Activated B cell treated with CpG ODN at 0.5 μM for 24 hours (primary cell): ENCODE measurements at regions of chr16 and their contacts with region 1.

Region 1: GRCh38 chr16:67470359-67470758 is 10.6 kb downstream of the ATP6V0D1 start:
- DNase-seq: no peak
- ATAC-seq: no peak
- H3K4me3 Mint-ChIP-seq: no peak overlapping the region
- H3K27ac Mint-ChIP-seq: no peak overlapping the region
- H3K4me1 Mint-ChIP-seq: peaks cover 60% of the 10 kb centered on the region
- H3K27me3 Mint-ChIP-seq: no peaks in the 10 kb centered on the region
- CTCF ChIP-seq: no peak

Region 2: GRCh38 chr16:67260426-67261075 is 209.8 kb before region 1 on chr16:
- CTCF ChIA-PET with region 1: interaction called, 9 read pairs
- POLR2A ChIA-PET with region 1: no interaction called
- intact Hi-C with region 1: loop called (anchors 5 kb)
- DNase-seq: no peak
- ATAC-seq: peak; percentile 45
- H3K4me3 Mint-ChIP-seq: no peak overlapping the region
- H3K27ac Mint-ChIP-seq: no peak overlapping the region
- H3K4me1 Mint-ChIP-seq: no peaks in the 10 kb centered on the region
- H3K27me3 Mint-ChIP-seq: peaks cover 5% of the 10 kb centered on the region
- CTCF ChIP-seq: no peak

Region 3: GRCh38 chr16:67279296-67280089 is 190.9 kb before region 1 on chr16 and contains the start of gene PLEKHG4:
- CTCF ChIA-PET with region 1: interaction called, 6 read pairs
- POLR2A ChIA-PET with region 1: no interaction called
- intact Hi-C with region 1: loop called (anchors 1 kb)
- DNase-seq: peak; percentile 73
- ATAC-seq: peak; percentile 97
- H3K4me3 Mint-ChIP-seq: peak within 1 kb of the TSS; percentile 79
- H3K27ac Mint-ChIP-seq: no peak within 1 kb of the TSS
- H3K4me1 Mint-ChIP-seq: peaks cover 3% of the 10 kb centered on the region
- H3K27me3 Mint-ChIP-seq: no peaks in the 10 kb centered on the region
- CTCF ChIP-seq: peak; percentile 41
- total RNA-seq, gene PLEKHG4: 7.8 TPM in 2 replicates

Region 4: DNA sequence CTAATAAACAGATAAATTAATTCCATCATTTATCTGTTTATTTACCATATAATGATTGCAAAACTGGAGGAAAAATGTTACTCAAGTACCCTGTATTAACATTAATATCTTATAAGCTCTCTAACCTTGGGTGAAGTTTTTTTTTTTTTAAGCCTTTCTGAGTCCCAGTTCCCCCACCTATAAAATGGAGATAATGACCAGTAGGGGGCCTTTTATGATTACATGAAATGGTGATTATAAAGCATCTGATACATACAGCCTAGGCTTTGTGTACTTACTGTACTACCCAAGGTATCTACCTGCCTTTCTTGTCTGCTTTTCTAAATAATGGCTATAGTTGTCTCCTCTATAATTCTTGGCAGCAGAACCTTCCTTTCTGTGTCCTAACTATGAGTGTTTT is 121.2 kb before region 1 on chr16:
- CTCF ChIA-PET with region 1: interaction called, 4 read pairs
- POLR2A ChIA-PET with region 1: no interaction called
- intact Hi-C with region 1: loop called (anchors 1 kb)
- DNase-seq: no peak
- ATAC-seq: peak; percentile 45
- H3K4me3 Mint-ChIP-seq: no peak overlapping the region
- H3K27ac Mint-ChIP-seq: no peak overlapping the region
- H3K4me1 Mint-ChIP-seq: no peaks in the 10 kb centered on the region
- H3K27me3 Mint-ChIP-seq: peaks cover 9% of the 10 kb centered on the region
- CTCF ChIP-seq: peak; percentile 52

Region 5: DNA sequence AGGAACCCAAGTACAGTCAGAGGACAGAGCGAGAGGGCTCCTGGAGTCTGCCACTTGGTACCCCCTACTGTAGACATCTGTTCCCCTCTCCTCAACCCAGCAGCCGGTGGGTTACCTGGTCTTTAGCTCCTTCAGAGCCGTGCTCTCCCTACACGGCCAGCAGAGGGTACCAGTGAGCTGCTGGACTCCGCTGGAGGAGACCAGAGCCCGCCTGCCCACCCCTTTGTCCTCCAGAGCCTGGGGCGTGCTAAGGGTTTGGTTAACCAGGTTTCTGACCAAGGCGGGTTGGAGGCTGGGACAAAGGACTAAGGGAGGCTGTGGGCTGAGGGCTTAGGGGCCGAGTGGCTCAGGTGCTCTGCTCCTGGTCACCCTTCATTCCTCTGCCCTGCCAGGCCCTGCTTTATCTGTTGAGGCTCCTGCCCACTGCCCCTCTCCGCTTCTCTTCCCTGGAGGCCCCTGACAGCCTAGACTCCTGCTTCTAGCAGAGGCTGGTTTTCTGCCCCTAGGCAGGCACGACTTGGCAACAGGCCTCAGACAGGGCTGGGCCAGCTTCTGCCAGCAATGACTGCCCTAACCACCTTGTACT is 42.1 kb before region 1 on chr16:
- CTCF ChIA-PET with region 1: interaction called, 63 read pairs
- POLR2A ChIA-PET with region 1: interaction called, 10 read pairs
- intact Hi-C with region 1: loop called (anchors 1 kb)
- DNase-seq: peak; percentile 51
- ATAC-seq: peak; percentile 76
- H3K4me3 Mint-ChIP-seq: no peak overlapping the region
- H3K27ac Mint-ChIP-seq: no peak overlapping the region
- H3K4me1 Mint-ChIP-seq: peaks cover 19% of the 10 kb centered on the region
- H3K27me3 Mint-ChIP-seq: peaks cover 37% of the 10 kb centered on the region
- CTCF ChIP-seq: peak; percentile 65

Region 6: GRCh38 chr16:67514382-67514828 is 44.0 kb after region 1 on chr16:
- CTCF ChIA-PET with region 1: interaction called, 4 read pairs
- POLR2A ChIA-PET with region 1: no interaction called
- intact Hi-C with region 1: loop called (anchors 1 kb)
- DNase-seq: no peak
- ATAC-seq: peak; percentile 23
- H3K4me3 Mint-ChIP-seq: peak overlapping the region; percentile 60
- H3K27ac Mint-ChIP-seq: peak overlapping the region; percentile 94
- H3K4me1 Mint-ChIP-seq: peaks cover 73% of the 10 kb centered on the region
- H3K27me3 Mint-ChIP-seq: no peaks in the 10 kb centered on the region
- CTCF ChIP-seq: no peak

Region 7: GRCh38 chr16:67528222-67528869 is 58.0 kb after region 1 on chr16 and contains the start of gene RIPOR1:
- CTCF ChIA-PET with region 1: no interaction called
- POLR2A ChIA-PET with region 1: no interaction called
- intact Hi-C with region 1: no loop called
- DNase-seq: no peak
- ATAC-seq: peak; percentile 33
- H3K4me3 Mint-ChIP-seq: peak within 1 kb of the TSS; percentile 90
- H3K27ac Mint-ChIP-seq: peak within 1 kb of the TSS; percentile 95
- H3K4me1 Mint-ChIP-seq: peaks cover 54% of the 10 kb centered on the region
- H3K27me3 Mint-ChIP-seq: no peaks in the 10 kb centered on the region
- CTCF ChIP-seq: no peak
- total RNA-seq, gene RIPOR1: 136 and 159 TPM in 2 replicates